Sigmoid colon (tissue), 7 donors: ENCODE measurements at regions of chr3 and their contacts with region 1.

Region 1: DNA sequence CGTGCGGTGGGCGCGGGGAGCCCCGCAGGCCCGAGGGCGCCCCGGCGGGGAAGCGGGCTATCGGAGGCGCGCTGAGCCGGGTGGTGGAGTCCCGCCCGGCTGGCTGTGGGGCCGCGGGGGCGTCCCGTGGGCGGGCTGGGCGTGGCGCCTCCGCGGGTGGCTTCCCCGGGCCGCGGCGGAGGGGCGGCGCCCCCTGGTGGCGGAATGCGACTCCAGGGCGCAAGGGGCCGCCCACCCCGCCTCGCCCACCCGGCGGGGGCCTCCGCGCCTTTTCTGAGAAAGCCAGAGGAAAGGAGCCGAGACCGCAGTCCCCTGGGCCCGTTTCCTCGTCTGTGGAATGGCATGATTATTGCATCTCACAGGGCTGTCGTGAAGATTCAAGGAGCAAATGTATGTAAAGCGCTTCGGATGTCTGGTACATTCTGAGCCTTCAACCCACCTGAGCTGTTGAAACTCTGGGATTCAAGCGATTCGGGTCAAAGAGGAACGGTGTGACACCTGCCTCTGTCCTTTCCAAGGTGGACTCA is 31.9 kb upstream of the RAB6B start:
- DNase-seq: no peak
- H3K4me3 ChIP-seq: peak overlapping the region; percentile 29 to 60 (median 54)
- H3K27ac ChIP-seq: peak overlapping the region in 1 of 4 donors; percentile 26
- H3K4me1 ChIP-seq: peaks cover 0 to 14% (median 12%) of the 10 kb centered on the region in 4 donors
- H3K27me3 ChIP-seq: no peaks in the 10 kb centered on the region
- CTCF ChIP-seq: peak; percentile 32 to 84 (median 42)
- EP300 ChIP-seq: no peak
- POLR2A ChIP-seq: no peak

Region 2: DNA sequence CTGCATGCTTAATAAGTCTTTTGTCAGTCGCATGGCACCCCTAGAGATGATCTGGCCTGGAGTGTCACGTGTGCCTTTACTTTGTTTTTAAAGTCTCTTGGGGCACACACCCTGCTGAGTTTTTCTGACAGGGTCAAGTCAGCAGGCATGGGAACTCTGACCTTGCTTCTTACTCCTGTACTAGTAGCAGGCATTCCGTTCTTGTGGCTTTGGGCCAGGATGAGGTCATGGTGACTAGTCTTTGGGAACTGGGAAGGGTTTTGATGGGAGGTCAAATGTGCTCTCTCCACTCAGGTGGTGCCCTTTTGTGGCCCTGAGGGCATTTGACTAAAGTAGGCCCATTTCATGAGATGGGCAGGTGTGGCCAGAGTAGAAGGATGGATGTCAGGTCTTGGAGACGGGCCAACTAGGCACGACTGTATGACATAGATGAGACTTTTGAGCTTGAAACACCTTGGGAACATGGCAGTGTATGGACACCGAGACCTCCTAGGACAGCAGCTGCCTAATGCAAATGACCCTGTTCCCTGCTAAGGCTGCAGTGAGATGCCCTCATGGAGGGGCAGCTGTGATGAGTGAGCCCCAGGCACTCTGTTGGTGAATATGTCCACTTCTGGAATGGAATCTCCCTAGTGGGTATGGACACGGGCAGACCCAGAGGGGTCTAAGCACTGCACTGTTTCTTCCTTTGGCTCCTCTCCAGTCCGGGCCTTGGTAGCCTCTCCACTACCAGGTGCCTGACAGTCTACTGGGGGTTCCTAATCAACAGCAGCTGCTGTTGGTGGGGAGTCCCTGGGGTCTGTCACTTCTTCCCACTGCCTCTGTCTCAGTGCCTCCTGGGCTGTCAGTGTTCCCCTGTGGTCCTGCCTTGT is 105.6 kb before region 1 on chr3:
- intact Hi-C with region 1: loop called (anchors 1 kb)
- DNase-seq: no peak
- H3K4me3 ChIP-seq: no peak overlapping the region
- H3K27ac ChIP-seq: no peak overlapping the region
- H3K4me1 ChIP-seq: no peaks in the 10 kb centered on the region
- H3K27me3 ChIP-seq: no peaks in the 10 kb centered on the region
- CTCF ChIP-seq: no peak
- EP300 ChIP-seq: no peak
- POLR2A ChIP-seq: no peak